MCF 10A (cell line): ENCODE measurements at regions of chr1 and their contacts with region 1.

Region 1: GRCh38 chr1:165827268-165828102 is at the start of gene UCK2:
- DNase-seq: peak; percentile 86
- H3K4me3 Mint-ChIP-seq: peak within 1 kb of the TSS; percentile 96
- H3K27ac Mint-ChIP-seq: peak within 1 kb of the TSS; percentile 90
- H3K4me1 Mint-ChIP-seq: peaks cover 25% of the 10 kb centered on the region
- H3K27me3 Mint-ChIP-seq: no peaks in the 10 kb centered on the region
- CTCF ChIP-seq: peak; percentile 6
- total RNA-seq, gene UCK2: 108 and 144 TPM in 2 replicates

Region 2: GRCh38 chr1:165717918-165718515 is 109.5 kb before region 1 on chr1:
- CTCF ChIA-PET with region 1: interaction called, 5 read pairs
- POLR2A ChIA-PET with region 1: interaction called, 3 read pairs
- intact Hi-C with region 1: loop called (anchors 5 kb)
- DNase-seq: peak; percentile 80
- H3K4me3 Mint-ChIP-seq: no peak overlapping the region
- H3K27ac Mint-ChIP-seq: no peak overlapping the region
- H3K4me1 Mint-ChIP-seq: no peaks in the 10 kb centered on the region
- H3K27me3 Mint-ChIP-seq: no peaks in the 10 kb centered on the region
- CTCF ChIP-seq: peak; percentile 87

Region 3: DNA sequence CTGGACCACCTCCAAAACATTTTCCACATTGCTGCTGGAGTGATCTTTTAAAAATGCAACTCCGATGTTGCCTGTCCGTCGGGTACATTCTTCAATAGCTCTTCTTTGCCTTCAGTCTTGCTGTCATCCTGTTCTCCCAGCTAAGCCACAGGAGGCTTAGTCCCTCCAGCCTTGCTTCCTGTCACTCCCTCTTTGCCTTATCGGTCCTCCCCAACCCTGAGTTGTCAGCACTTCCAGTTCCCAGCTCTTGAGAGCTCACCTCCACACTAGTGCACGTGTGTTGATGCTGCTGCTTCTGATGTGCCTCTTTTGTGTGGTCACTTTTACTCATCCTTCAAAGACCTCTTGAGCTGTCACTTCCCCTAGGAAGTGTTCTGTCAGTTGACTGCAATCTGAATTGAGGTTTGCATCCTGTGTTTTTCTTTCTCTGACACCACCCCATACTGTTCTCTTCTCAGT is 15.2 kb after region 1 on chr1:
- CTCF ChIA-PET with region 1: interaction called, 17 read pairs
- POLR2A ChIA-PET with region 1: interaction called, 15 read pairs
- intact Hi-C with region 1: no loop called
- DNase-seq: peak; percentile 18
- H3K4me3 Mint-ChIP-seq: no peak overlapping the region
- H3K27ac Mint-ChIP-seq: peak overlapping the region; percentile 13
- H3K4me1 Mint-ChIP-seq: peaks cover 29% of the 10 kb centered on the region
- H3K27me3 Mint-ChIP-seq: no peaks in the 10 kb centered on the region
- CTCF ChIP-seq: no peak

Region 4: GRCh38 chr1:165857046-165857801 is 29.7 kb after region 1 on chr1:
- CTCF ChIA-PET with region 1: interaction called, 10 read pairs
- POLR2A ChIA-PET with region 1: interaction called, 16 read pairs
- intact Hi-C with region 1: no loop called
- DNase-seq: peak; percentile 54
- H3K4me3 Mint-ChIP-seq: no peak overlapping the region
- H3K27ac Mint-ChIP-seq: peak overlapping the region; percentile 2
- H3K4me1 Mint-ChIP-seq: peaks cover 69% of the 10 kb centered on the region
- H3K27me3 Mint-ChIP-seq: no peaks in the 10 kb centered on the region
- CTCF ChIP-seq: no peak

Region 5: DNA sequence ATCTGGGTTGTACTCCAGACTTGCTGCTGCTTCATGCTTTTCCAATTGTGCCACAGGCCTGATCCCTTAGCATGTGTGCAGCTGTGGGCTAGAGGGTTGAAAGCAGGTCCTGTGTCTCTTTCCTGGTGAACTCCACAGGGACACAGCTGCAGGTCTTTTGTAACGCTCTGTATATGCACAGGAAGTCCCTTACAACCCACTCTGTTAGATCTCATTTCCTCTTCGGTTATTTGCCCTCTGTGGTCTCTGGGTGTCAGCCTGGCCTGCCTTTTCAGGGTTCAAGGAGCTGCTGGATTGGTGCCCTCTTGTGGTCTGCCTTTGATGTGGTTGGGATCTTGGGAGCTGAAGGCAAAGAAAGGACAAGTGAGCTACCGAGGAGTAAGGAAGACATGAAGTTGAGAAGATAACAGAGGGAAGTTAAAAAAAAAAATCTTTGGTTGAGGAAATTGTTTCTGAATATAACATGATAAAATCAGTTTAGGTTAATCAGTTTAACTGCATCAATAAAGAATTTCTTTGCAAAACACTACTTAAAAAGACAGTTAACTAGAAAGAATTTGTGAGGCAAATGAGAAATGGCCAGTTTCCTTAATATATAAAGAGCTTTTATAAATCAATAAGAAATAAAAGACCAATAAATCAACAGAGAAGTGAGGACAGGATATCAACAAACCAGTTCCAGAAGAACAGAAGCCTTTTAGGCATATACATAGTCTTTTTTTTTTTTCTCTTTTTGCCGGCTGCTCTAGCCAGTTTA is 44.0 kb after region 1 on chr1:
- CTCF ChIA-PET with region 1: interaction called, 8 read pairs
- POLR2A ChIA-PET with region 1: interaction called, 8 read pairs
- intact Hi-C with region 1: loop called (anchors 1 kb)
- DNase-seq: peak; percentile 85
- H3K4me3 Mint-ChIP-seq: no peak overlapping the region
- H3K27ac Mint-ChIP-seq: peak overlapping the region; percentile 5
- H3K4me1 Mint-ChIP-seq: peaks cover 33% of the 10 kb centered on the region
- H3K27me3 Mint-ChIP-seq: no peaks in the 10 kb centered on the region
- CTCF ChIP-seq: peak; percentile 25

Region 6: GRCh38 chr1:165898837-165899236 is 71.4 kb after region 1 on chr1:
- CTCF ChIA-PET with region 1: interaction called, 36 read pairs
- POLR2A ChIA-PET with region 1: interaction called, 106 read pairs
- intact Hi-C with region 1: loop called (anchors 2 kb)
- DNase-seq: peak; percentile 73
- H3K4me3 Mint-ChIP-seq: peak overlapping the region; percentile 56
- H3K27ac Mint-ChIP-seq: peak overlapping the region; percentile 60
- H3K4me1 Mint-ChIP-seq: peaks cover 65% of the 10 kb centered on the region
- H3K27me3 Mint-ChIP-seq: no peaks in the 10 kb centered on the region
- CTCF ChIP-seq: no peak

Region 7: DNA sequence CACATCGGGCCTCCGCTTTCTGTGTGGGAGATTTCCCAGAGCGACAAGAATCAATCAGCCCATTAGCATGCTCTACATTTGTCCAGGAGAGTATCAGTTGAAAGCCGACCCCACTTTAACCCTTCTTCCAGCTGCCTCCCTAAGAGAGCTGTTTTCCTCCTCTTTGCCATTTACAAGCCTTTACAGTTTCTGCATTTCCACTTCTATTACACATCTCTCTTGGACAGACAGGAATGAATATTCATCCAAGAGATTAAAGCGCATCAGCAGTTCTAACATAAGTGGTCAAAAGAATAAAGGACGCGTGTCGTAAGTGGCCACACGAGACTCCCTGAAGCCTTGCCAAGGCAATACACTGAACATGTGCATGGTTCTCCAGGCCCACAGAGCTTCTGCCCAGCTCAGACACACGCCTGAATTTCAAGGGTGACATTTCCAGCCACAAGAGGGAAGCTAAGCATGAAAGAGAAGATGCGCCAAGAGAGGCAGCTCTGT is 292.0 kb after region 1 on chr1:
- CTCF ChIA-PET with region 1: no interaction called
- POLR2A ChIA-PET with region 1: no interaction called
- intact Hi-C with region 1: no loop called
- DNase-seq: no peak
- H3K4me3 Mint-ChIP-seq: no peak overlapping the region
- H3K27ac Mint-ChIP-seq: no peak overlapping the region
- H3K4me1 Mint-ChIP-seq: no peaks in the 10 kb centered on the region
- H3K27me3 Mint-ChIP-seq: no peaks in the 10 kb centered on the region
- CTCF ChIP-seq: no peak